ENCODE measurements at regions of chr17 and their contacts with region 1.

Region 1: DNA sequence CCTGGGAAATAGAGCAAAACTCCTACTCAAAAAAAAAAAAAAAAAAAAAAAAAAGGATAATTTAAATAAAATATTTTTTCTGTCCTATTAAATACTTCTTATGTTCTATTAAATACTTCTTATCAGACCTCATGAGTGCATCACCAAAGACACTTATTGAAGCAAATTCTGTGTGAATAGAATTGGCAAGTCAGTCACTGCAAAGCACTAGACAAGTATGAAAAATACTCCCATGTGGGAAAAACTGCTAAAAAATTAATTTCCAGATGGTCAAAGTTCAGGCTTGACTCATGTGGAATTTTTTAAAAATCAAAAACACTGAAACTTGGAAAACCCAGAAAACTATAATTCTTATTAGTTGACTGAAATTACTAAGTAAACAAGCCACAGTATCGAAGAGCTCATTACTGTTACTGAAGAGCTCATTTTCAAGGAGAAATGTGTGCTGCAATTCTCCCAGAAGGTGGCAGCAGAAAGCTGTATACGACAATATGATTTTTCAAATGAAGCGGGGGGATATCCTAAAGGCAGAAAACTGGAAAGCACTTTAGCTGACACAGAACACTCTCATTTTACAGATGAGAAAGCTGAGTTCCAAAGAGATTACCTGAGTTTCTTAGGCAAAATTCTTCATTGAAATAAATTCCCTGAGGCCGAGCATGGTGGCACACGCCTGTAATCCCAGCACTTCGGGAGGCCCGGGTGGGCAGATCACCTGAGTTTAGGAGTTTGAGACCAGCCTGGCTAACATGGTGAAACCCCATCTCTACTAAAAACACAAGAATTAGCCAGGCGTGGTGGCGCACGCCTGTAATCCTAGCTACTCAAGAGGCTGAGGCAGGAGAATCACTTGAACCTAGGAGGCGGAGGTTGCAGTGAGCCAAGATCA is 15.9 kb upstream of the FBXO47 start:
- DNase-seq: peak; percentile 64 to 82
- H3K4me3 ChIP-seq: no peak overlapping the region
- H3K4me1 ChIP-seq: no peaks in the 10 kb centered on the region
- H3K27me3 ChIP-seq: no peaks in the 10 kb centered on the region

Region 2: DNA sequence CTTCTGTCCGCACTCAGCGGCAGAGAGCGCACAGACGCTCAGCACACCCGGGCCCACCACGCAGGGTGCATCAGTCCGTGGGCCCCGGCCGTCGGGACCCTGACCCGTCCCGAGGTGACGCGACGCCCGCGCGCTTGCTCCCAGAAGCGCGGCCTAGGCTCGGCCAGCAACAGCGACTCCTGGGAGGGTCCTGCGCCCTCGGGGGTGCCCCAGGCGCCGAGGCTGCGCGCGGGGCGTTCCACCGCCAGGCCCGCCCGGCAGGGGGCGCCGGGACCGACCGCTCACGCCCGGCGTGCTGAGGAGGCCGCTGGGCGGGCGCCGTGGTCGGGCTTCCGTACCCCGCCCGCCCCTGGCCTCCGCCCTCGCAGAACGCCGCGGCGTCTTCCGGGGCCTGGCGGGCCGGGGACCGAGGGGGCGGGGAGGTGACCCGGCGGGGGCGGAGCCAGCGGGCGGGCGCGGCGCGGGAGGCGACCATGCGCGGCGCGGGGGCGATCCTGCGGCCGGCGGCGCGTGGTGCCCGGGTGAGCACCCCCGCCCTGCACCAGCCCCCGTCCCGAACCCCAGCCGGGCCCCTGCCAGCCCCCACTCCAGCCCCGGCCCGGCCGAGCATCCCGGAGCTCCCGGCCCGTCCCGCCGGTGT is 253.1 kb before region 1 on chr17 and contains the start of gene CISD3:
- in situ Hi-C with region 1: no loop called
- DNase-seq: peak; percentile 86 to 89
- H3K4me3 ChIP-seq: peak within 1 kb of the TSS; percentile 71
- H3K4me1 ChIP-seq: peaks cover 7% of the 10 kb centered on the region
- H3K27me3 ChIP-seq: no peaks in the 10 kb centered on the region

Region 3: GRCh38 chr17:39156491-39156890 is 173.4 kb after region 1 on chr17:
- in situ Hi-C with region 1: loop called (anchors 5 kb)
- DNase-seq: no peak
- H3K4me3 ChIP-seq: no peak overlapping the region
- H3K4me1 ChIP-seq: peaks cover 4% of the 10 kb centered on the region
- H3K27me3 ChIP-seq: no peaks in the 10 kb centered on the region

Region 4: GRCh38 chr17:39244600-39245570 is 261.8 kb after region 1 on chr17:
- in situ Hi-C with region 1: loop called (anchors 10 kb)
- DNase-seq: peak; percentile 73 to 93
- H3K4me3 ChIP-seq: no peak overlapping the region
- H3K4me1 ChIP-seq: no peaks in the 10 kb centered on the region
- H3K27me3 ChIP-seq: no peaks in the 10 kb centered on the region